ENCODE measurements at regions of chr12 and their contacts with region 1.

Region 1: DNA sequence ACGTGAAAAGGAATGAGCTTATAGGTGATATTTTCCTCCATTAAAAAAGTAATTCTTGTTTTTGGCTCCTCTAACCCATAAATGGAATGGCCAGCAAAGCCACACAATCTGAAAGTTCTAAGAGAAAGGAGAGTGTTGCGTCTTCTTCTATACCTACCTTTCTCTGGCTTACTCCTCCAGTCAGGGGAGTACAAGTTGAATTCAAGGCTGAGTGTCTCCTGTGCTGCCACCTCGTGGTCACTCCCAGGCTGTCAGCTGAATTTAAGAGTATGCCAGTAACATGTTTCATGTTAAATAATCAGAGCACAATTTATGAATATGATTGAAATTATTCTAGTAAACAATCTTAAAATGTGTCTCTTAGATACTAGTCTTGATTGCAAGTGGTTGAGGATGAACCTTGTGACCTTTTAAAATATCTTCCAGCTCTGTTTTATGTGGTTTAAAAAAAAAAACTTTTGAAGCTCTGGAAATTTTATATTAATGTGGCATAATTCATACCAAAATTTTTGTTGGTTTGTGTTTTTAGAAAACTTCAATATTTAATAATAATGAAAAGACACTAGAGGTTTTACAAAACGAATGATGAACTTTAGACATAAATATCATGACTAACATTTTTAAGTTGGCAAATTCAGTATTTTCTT is 31.7 kb downstream of the PTHLH start:
- DNase-seq: peak; percentile 54 to 87
- ATAC-seq: peak; percentile 84 to 98; a peak in 5 of 6 replicates
- H3K4me3 ChIP-seq: no peak overlapping the region
- H3K27ac ChIP-seq: no peak overlapping the region
- H3K4me1 ChIP-seq: no peaks in the 10 kb centered on the region
- CTCF ChIP-seq: peak; percentile 89
- EP300 ChIP-seq: no peak
- POLR2A ChIP-seq: no peak
- RAD21 ChIP-seq: peak; percentile 75 to 84

Region 2: DNA sequence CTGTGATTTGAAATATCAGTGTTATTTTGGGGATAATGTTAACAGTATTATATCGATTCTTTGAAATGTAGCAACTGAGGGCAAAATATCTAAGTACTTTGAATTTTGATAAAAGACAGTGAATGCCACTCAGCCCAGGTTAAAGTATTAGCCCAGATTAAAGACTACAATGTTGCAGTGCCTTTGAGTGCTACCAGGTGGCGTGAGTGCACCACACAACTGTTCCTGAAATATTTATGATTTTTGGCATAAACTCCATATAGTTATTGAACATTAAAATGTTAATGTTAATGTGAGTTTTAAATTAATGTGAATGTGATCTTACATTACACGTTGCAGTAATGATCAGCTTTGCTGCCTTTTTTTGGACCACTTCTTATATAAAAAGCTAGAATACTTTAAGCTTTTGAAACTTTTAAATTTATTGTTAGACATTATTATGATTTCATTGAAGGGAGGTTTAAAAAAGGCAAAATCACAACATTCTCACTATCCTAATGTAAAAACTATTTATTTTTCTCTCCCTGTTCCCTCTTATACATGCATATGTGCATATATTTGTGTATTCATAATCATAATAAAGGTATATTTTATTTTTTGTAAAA is 207.7 kb before region 1 on chr12:
- CTCF ChIA-PET with region 1: interaction called, 19 read pairs
- POLR2A ChIA-PET with region 1: no interaction called
- DNase-seq: peak; percentile 39 to 55
- ATAC-seq: peak; percentile 64 to 81; a peak in 4 of 6 replicates
- H3K4me3 ChIP-seq: no peak overlapping the region
- H3K27ac ChIP-seq: no peak overlapping the region
- H3K4me1 ChIP-seq: no peaks in the 10 kb centered on the region
- CTCF ChIP-seq: peak; percentile 93
- EP300 ChIP-seq: no peak
- POLR2A ChIP-seq: no peak
- RAD21 ChIP-seq: peak; percentile 94 to 95

Region 3: GRCh38 chr12:27927347-27927746 is 13.5 kb before region 1 on chr12:
- CTCF ChIA-PET with region 1: interaction called, 15 read pairs
- POLR2A ChIA-PET with region 1: no interaction called
- DNase-seq: no peak
- ATAC-seq: no peak
- H3K4me3 ChIP-seq: no peak overlapping the region
- H3K27ac ChIP-seq: no peak overlapping the region
- H3K4me1 ChIP-seq: no peaks in the 10 kb centered on the region
- CTCF ChIP-seq: no peak
- EP300 ChIP-seq: no peak
- POLR2A ChIP-seq: no peak
- RAD21 ChIP-seq: no peak

Region 4: GRCh38 chr12:27952510-27952909 is 11.6 kb after region 1 on chr12:
- CTCF ChIA-PET with region 1: interaction called, 12 read pairs
- POLR2A ChIA-PET with region 1: no interaction called
- DNase-seq: no peak
- ATAC-seq: no peak
- H3K4me3 ChIP-seq: no peak overlapping the region
- H3K27ac ChIP-seq: no peak overlapping the region
- H3K4me1 ChIP-seq: no peaks in the 10 kb centered on the region
- CTCF ChIP-seq: no peak
- EP300 ChIP-seq: no peak
- POLR2A ChIP-seq: no peak
- RAD21 ChIP-seq: no peak

Region 5: DNA sequence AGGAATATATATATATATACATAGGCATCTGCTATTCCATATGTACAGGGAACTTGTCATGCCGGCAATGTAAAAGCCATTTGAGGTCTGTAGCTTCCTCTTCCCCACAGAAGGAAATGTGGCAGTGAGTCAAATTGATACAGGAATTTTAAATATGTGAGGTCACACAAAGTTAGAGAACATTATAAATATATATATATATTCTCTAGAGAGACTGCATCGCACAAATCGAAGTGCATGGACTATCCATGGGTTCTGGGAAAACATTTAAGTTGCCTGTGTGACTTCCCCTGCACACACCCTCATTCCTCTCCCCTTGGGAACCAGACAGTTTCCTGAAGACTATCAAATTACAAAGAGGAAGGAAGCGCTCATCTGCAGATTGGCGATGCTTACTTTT is 148.5 kb after region 1 on chr12:
- CTCF ChIA-PET with region 1: no interaction called
- POLR2A ChIA-PET with region 1: no interaction called
- DNase-seq: peak in 1 of 2 experiments; percentile 17
- ATAC-seq: no peak
- H3K4me3 ChIP-seq: no peak overlapping the region
- H3K27ac ChIP-seq: no peak overlapping the region
- H3K4me1 ChIP-seq: peaks cover 8% of the 10 kb centered on the region; the same call in 1 of the 3 replicates
- CTCF ChIP-seq: no peak
- EP300 ChIP-seq: no peak
- POLR2A ChIP-seq: no peak
- RAD21 ChIP-seq: no peak